Panc1 (cell line): ENCODE measurements at regions of chr12 and their contacts with region 1.

Region 1: DNA sequence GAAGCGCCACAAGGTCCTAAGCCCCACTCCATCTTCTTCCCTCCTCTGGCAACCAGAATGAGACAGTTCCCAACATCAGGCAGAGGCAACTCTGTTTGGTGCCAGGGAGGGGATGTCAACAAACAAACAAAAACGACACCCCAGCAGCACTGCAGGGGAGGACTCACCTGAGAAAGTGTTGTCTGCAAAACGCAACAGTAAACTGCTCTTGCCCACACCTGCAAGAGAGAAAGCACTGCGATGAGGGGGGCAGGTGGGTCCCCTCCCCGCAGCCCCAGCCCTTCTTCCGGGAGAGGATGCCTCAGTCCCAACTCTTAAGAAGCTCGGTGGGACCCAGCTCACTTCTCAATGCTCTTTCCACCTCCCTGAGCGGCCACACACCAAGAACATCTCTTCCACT is 8.3 kb downstream of the RAB35 start:
- DNase-seq: no peak
- ATAC-seq: no peak
- H3K4me3 ChIP-seq: no peak overlapping the region
- H3K27ac ChIP-seq: no peak overlapping the region
- H3K4me1 ChIP-seq: peaks cover 3% of the 10 kb centered on the region; the same call in 1 of the 2 replicates
- H3K27me3 ChIP-seq: no peaks in the 10 kb centered on the region
- CTCF ChIP-seq: no peak

Region 2: GRCh38 chr12:120064054-120064940 is 44.0 kb before region 1 on chr12:
- CTCF ChIA-PET with region 1: no interaction called
- POLR2A ChIA-PET with region 1: interaction called, 13 read pairs
- in situ Hi-C with region 1: no loop called
- intact Hi-C with region 1: no loop called
- DNase-seq: no peak
- ATAC-seq: no peak
- H3K4me3 ChIP-seq: no peak overlapping the region
- H3K27ac ChIP-seq: no peak overlapping the region
- H3K4me1 ChIP-seq: no peaks in the 10 kb centered on the region
- H3K27me3 ChIP-seq: no peaks in the 10 kb centered on the region
- CTCF ChIP-seq: no peak